Ascending aorta (tissue), 2 donors: ENCODE measurements at regions of chr7 and their contacts with region 1.

Region 1: GRCh38 chr7:95886501-95887090 is 114.2 kb downstream of the DYNC1I1 start:
- DNase-seq: no peak
- H3K4me3 ChIP-seq: no peak overlapping the region
- H3K27ac ChIP-seq: no peak overlapping the region
- H3K4me1 ChIP-seq: no peaks in the 10 kb centered on the region
- H3K27me3 ChIP-seq: no peaks in the 10 kb centered on the region
- CTCF ChIP-seq: no peak

Region 2: DNA sequence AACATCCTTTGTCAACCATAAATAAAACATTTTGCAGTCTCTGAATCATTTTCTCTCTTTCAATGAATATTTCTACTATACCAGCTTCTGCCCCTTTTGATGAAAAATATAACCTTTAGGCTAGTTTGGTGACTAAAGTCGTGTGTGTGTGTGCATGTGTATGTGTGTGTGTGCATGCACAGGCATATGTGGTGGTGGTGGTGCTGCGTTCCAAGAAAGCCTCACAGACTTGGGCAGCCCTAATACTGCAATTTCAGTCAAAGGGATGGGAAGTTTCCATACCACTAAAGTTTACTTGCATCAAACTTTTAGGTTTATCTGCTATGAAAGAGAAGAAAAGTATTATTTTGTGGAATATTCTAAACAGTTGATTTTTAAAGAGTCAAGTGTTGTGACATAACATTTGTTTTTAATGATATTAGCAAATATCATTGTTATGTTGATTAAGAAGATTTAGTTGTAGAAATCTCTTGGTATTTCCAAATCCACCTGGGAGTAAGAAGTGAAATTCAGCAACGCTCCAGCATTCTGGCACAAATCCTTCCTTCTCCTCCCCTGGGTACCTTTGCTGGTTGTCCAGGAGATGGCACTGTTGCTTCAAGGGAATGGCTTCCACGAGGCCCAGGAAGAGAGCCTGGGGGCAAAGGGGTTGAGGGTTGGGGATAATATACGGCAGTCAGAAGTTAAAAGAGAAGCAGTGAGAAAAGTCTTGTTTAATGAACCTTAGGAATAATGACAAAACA is 359.4 kb before region 1 on chr7:
- intact Hi-C with region 1: loop called (anchors 10 kb)
- DNase-seq: peak in 1 of 2 donors; percentile 69
- H3K4me3 ChIP-seq: no peak overlapping the region
- H3K27ac ChIP-seq: no peak overlapping the region
- H3K4me1 ChIP-seq: no peaks in the 10 kb centered on the region
- H3K27me3 ChIP-seq: no peaks in the 10 kb centered on the region
- CTCF ChIP-seq: peak; percentile 69 to 90 (median 78)